ENCODE measurements at regions of chr6 and their contacts with region 1.

Region 1: DNA sequence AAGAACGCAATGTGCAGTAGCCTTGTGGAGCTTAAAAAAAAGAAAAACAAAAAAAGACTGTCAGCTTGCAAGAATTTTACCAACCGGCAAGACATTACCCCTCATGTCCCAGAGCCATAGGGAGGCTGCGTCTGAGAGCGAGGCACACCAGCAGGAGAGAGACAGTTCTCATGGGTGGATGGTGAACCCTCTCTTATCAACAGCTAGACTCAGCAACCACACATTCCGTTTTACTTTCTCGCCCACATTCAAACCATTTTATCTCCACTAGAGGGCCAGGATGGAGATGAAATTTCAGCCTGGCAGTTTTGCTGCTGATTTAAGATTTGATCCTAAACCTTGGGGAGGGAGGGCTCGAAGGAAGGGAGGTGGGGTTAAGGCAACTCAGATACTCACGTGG is 247.0 kb downstream of the ATXN1 start:
- DNase-seq: peak; percentile 39
- H3K4me3 Mint-ChIP-seq: no peak overlapping the region
- H3K27ac Mint-ChIP-seq: no peak overlapping the region
- H3K4me1 Mint-ChIP-seq: peaks cover 79% of the 10 kb centered on the region
- H3K27me3 Mint-ChIP-seq: no peaks in the 10 kb centered on the region

Region 2: DNA sequence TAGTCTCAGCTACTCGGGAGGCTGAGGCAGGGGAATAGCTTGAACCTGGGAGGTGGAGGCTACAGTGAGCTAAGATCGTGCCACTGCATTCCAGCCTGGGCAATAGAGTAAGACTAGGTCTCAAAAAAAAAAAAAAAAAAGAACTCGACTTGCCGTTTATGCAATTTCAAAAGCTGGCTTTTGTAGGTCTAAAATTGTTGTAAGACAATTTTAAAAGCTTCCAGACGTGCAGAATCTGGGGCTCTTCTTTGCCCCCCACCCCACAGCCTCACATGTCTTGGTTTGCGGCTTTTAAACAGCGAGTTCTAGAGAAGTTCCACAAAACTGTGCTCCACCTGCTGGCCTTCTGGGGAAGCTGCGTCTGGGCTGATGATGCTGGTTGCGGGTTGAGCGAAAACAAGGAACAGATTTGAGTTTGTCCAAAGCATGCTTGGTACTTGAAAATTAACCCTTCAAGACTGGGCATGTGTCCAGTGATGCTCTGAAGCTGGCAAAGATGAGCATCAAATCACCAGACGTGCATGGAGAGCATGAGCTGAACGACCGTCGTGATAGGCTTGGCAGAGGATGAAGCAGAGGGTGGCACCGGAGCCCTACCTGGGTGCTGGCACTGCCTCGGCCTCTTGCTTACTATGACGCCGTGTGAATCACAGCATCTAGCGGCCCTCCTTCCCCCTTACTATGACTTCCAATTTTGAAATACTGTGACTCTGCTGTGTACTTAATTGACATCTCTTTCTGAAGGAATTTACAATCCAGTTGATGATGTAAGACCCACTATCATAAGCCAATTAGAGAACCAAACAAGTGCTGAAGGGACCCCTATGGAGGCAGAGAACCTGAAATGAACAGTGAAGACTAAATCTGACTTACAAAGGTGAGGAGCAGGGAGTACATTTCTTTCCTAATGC is 104.5 kb before region 1 on chr6:
- CTCF ChIA-PET with region 1: interaction called, 9 read pairs
- POLR2A ChIA-PET with region 1: interaction called, 6 read pairs
- intact Hi-C with region 1: loop called (anchors 1 kb)
- DNase-seq: peak; percentile 82
- H3K4me3 Mint-ChIP-seq: peak overlapping the region; percentile 71
- H3K27ac Mint-ChIP-seq: peak overlapping the region; percentile 81
- H3K4me1 Mint-ChIP-seq: peaks cover 66% of the 10 kb centered on the region
- H3K27me3 Mint-ChIP-seq: no peaks in the 10 kb centered on the region

Region 3: DNA sequence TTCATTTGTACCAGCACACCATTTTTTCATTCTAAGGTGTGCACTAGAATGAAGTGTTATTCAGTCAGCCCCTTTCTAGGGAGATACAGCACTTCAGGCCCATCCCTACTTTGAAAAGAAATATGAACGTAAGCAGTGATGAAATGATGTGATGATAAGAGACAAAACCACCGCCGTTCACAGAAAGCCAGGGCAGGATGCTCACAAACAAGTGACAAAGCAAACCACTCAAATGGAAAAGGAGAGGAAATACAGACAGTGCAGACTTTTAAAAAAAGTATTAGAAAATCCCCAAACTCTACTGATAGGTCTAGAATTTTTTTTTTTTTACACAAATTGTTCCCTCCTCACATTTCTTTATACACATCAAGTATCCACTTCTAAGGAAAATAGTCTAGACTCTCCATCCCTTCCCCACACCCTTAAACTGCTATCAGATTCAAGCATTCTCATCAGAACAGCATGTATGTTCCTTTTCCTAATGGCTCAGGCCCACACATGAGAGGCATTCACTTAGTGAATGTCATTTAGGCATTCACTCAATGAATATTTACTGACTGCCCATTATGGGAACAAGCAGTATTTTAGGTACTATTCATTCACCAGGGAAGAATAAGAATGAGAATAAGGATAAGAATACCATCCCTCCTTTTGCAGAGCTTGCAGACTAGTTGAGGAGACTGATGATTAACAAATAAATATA is 32.4 kb before region 1 on chr6:
- CTCF ChIA-PET with region 1: interaction called, 11 read pairs
- POLR2A ChIA-PET with region 1: no interaction called
- intact Hi-C with region 1: loop called (anchors 1 kb)
- DNase-seq: peak; percentile 76
- H3K4me3 Mint-ChIP-seq: peak overlapping the region; percentile 47
- H3K27ac Mint-ChIP-seq: peak overlapping the region; percentile 87
- H3K4me1 Mint-ChIP-seq: peaks cover 93% of the 10 kb centered on the region
- H3K27me3 Mint-ChIP-seq: no peaks in the 10 kb centered on the region

Region 4: GRCh38 chr6:16533721-16534136 is 19.5 kb after region 1 on chr6:
- CTCF ChIA-PET with region 1: interaction called, 24 read pairs
- POLR2A ChIA-PET with region 1: interaction called, 14 read pairs
- intact Hi-C with region 1: loop called (anchors 1 kb)
- DNase-seq: no peak
- H3K4me3 Mint-ChIP-seq: no peak overlapping the region
- H3K27ac Mint-ChIP-seq: peak overlapping the region; percentile 77
- H3K4me1 Mint-ChIP-seq: peaks cover 43% of the 10 kb centered on the region
- H3K27me3 Mint-ChIP-seq: no peaks in the 10 kb centered on the region

Region 5: GRCh38 chr6:16657768-16658167 is 143.5 kb after region 1 on chr6:
- CTCF ChIA-PET with region 1: interaction called, 13 read pairs
- POLR2A ChIA-PET with region 1: interaction called, 3 read pairs
- intact Hi-C with region 1: loop called (anchors 5 kb)
- DNase-seq: no peak
- H3K4me3 Mint-ChIP-seq: peak overlapping the region; percentile 60
- H3K27ac Mint-ChIP-seq: peak overlapping the region; percentile 87
- H3K4me1 Mint-ChIP-seq: peaks cover 80% of the 10 kb centered on the region
- H3K27me3 Mint-ChIP-seq: no peaks in the 10 kb centered on the region

Region 6: GRCh38 chr6:16770701-16771569 is 256.7 kb after region 1 on chr6:
- CTCF ChIA-PET with region 1: interaction called, 62 read pairs
- POLR2A ChIA-PET with region 1: no interaction called
- intact Hi-C with region 1: no loop called
- DNase-seq: peak; percentile 86
- H3K4me3 Mint-ChIP-seq: peak overlapping the region; percentile 42
- H3K27ac Mint-ChIP-seq: no peak overlapping the region
- H3K4me1 Mint-ChIP-seq: peaks cover 50% of the 10 kb centered on the region
- H3K27me3 Mint-ChIP-seq: no peaks in the 10 kb centered on the region